Right ventricle myocardium inferior (tissue), 1 donor: ENCODE measurements at regions of chr11 and their contacts with region 1.

Region 1: GRCh38 chr11:100687630-100688395 is 725 bp downstream of the ARHGAP42 start:
- DNase-seq: peak; percentile 74
- ATAC-seq: peak; percentile 75

Region 2: GRCh38 chr11:100525635-100526034 is 162.2 kb before region 1 on chr11:
- intact Hi-C with region 1: no loop called
- DNase-seq: no peak
- ATAC-seq: no peak

Region 3: DNA sequence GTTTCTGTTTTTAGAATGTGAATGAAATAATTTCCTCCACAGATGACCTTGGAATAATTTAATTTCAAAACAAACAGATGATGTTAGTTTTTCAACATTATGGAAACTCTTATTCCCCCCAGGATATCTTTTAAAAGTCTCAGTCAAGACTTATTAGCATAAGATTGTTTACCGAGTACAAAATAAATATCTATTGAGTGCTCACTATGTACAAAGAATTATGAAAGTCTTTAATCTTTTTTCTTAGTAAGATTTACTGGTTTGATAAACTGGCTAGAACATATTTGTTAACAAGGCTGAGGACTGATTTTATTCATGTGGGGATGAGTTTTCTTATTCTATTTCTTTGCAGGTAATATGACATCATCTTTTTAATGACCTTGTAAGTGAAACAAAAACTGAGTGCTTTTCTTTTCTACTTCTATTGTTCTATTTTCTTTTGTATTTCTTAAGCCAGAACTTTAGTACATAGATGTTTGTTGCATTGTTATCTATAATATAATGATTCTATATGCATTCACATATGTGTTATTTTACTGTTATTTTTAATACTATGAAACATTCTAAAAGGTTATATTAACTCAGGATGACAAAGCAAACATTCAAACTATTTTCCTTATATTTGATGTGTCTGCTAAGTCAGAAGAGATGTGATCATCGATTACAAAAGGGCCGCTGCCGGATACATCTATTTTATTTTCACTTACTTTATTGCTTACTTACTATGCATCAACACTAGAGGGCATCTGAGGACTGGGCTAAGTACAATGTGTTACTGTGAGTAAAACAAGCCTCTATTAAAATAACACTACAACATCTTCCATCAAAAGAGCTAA is 111.7 kb before region 1 on chr11:
- intact Hi-C with region 1: loop called (anchors 5 kb)
- DNase-seq: no peak
- ATAC-seq: peak; percentile 79

Region 4: DNA sequence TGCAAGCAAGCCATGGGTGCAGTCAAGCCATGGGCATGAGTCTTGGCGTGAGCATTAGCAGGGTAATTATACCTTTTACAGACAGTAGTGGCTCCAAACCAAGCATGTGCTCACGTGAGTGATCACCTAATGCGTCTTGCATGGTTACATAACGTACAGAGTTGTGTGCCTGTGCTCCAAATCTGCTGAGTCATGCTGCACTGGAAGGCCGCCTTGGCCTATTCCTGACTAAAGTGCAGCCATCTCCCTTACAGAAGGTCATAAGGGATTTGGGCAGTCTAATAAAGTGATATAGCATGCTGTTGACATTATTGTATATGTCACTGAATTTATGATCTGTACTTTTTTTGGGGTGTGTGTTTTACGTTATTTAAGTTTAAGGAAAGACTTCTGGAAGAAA is 101.7 kb after region 1 on chr11:
- intact Hi-C with region 1: loop called (anchors 5 kb)
- DNase-seq: no peak
- ATAC-seq: no peak